H1 (cell line): ENCODE measurements at regions of chr12 and their contacts with region 1.

Region 1: GRCh38 chr12:22283006-22283506 is 51.5 kb downstream of the ST8SIA1 start:
- DNase-seq: no peak
- H3K4me3 ChIP-seq: no peak overlapping the region
- H3K27ac ChIP-seq: no peak overlapping the region
- H3K4me1 ChIP-seq: peaks cover 0 to 4% (median under 1%) of the 10 kb centered on the region in 4 experiments; a peak in 3 of 7 replicates
- H3K27me3 ChIP-seq: no peaks in the 10 kb centered on the region
- CTCF ChIP-seq: no peak
- EP300 ChIP-seq: no peak
- POLR2A ChIP-seq: no peak
- RAD21 ChIP-seq: no peak

Region 2: DNA sequence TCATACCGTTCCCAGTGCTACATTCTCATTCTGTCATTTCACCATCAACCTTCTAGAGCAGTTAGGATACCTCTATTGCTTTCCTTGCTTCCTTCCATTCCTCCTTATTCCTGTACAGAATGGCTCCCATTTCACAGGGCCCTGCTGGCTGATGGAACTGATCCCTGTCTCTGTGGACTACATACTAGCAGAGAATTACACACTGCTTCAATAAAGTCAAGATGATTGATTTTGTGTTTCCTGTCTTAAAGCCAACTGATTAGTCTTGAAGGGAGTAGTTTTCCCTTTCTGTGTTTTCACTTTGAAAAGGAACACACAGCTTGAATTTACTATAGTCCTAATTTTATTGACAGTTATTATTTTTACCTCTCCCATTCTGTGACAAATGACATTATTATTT is 78.7 kb before region 1 on chr12:
- CTCF ChIA-PET with region 1: no interaction called
- POLR2A ChIA-PET with region 1: no interaction called
- DNase-seq: no peak
- H3K4me3 ChIP-seq: no peak overlapping the region
- H3K27ac ChIP-seq: no peak overlapping the region
- H3K4me1 ChIP-seq: no peaks in the 10 kb centered on the region
- H3K27me3 ChIP-seq: no peaks in the 10 kb centered on the region
- CTCF ChIP-seq: no peak
- EP300 ChIP-seq: no peak
- POLR2A ChIP-seq: no peak
- RAD21 ChIP-seq: no peak

Region 3: GRCh38 chr12:22268406-22268805 is 14.7 kb before region 1 on chr12:
- CTCF ChIA-PET with region 1: interaction called, 10 read pairs
- POLR2A ChIA-PET with region 1: no interaction called
- DNase-seq: no peak
- H3K4me3 ChIP-seq: no peak overlapping the region
- H3K27ac ChIP-seq: no peak overlapping the region
- H3K4me1 ChIP-seq: no peaks in the 10 kb centered on the region
- H3K27me3 ChIP-seq: no peaks in the 10 kb centered on the region
- CTCF ChIP-seq: no peak
- EP300 ChIP-seq: no peak
- POLR2A ChIP-seq: no peak
- RAD21 ChIP-seq: no peak